Endothelial cell of umbilical vein (primary cell): ENCODE measurements at regions of chr5 and their contacts with region 1.

Region 1: DNA sequence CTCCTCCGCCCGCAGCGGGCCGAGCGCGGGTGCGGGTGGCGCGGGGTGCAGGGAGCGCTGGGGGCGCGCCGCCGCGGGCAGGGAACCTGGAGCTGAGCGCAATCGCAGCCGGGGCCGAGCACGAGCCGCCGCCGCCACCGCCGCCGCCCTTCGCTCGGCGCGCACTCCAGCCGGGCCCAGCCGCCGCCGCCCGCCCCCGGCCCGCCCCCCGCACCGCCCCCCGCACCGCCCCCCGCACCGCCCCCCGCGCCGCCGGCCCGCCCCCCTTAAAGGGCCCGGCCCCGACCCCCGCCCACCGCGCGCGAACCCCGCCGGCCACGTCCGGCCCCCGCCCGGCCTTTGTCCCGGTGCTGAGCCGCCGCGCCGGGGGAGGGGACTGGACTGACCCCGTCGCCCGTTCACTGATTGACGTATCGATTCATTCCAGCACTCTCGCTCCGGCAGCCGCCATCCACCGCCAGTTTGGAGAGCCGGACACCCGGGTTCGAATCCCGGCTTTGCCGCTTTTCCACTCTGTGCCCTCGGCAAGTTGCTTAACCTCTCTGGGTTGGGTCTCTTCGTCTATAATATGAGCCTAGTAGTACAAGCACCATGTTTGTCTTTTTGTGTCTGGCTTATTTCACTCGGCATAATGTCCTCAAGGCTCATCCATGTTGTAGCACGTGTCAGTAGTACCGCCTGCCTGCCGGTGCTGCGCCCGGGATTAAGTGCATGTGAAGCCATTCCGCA is at the start of gene SH3PXD2B:
- DNase-seq: peak; percentile 51
- H3K4me3 ChIP-seq: peak within 1 kb of the TSS; percentile 92 to 98 (median 95)
- H3K27ac ChIP-seq: peak within 1 kb of the TSS; percentile 63
- H3K4me1 ChIP-seq: peaks cover 36% of the 10 kb centered on the region
- H3K27me3 ChIP-seq: no peaks in the 10 kb centered on the region
- CTCF ChIP-seq: no peak
- POLR2A ChIP-seq: peak; percentile 61
- total RNA-seq, gene SH3PXD2B: 66.3 and 71.8 TPM in 2 replicates

Region 2: GRCh38 chr5:171633816-171634470 is 820.6 kb before region 1 on chr5:
- CTCF ChIA-PET with region 1: no interaction called
- POLR2A ChIA-PET with region 1: no interaction called
- dilution Hi-C with region 1: no loop called
- intact Hi-C with region 1: no loop called
- DNase-seq: no peak
- H3K4me3 ChIP-seq: no peak overlapping the region
- H3K27ac ChIP-seq: no peak overlapping the region
- H3K4me1 ChIP-seq: peaks cover 9% of the 10 kb centered on the region
- H3K27me3 ChIP-seq: peaks cover 0 to 2% of the 10 kb centered on the region in 2 experiments
- CTCF ChIP-seq: no peak
- POLR2A ChIP-seq: no peak

Region 3: GRCh38 chr5:172283020-172283861 is 171.3 kb before region 1 on chr5 and contains the start of gene UBTD2:
- CTCF ChIA-PET with region 1: interaction called, 4 read pairs
- POLR2A ChIA-PET with region 1: no interaction called
- dilution Hi-C with region 1: no loop called
- intact Hi-C with region 1: loop called (anchors 5 kb)
- DNase-seq: peak; percentile 79
- H3K4me3 ChIP-seq: peak within 1 kb of the TSS; percentile 73 to 93 (median 92)
- H3K27ac ChIP-seq: peak within 1 kb of the TSS; percentile 82
- H3K4me1 ChIP-seq: peaks cover 21% of the 10 kb centered on the region
- H3K27me3 ChIP-seq: no peaks in the 10 kb centered on the region
- CTCF ChIP-seq: peak; percentile 35 to 65
- POLR2A ChIP-seq: peak; percentile 84
- total RNA-seq, gene UBTD2: 21.6 and 22.6 TPM in 2 replicates

Region 4: GRCh38 chr5:172412724-172413286 is 41.7 kb before region 1 on chr5:
- CTCF ChIA-PET with region 1: interaction called, 23 read pairs
- POLR2A ChIA-PET with region 1: no interaction called
- dilution Hi-C with region 1: no loop called
- intact Hi-C with region 1: loop called (anchors 2 kb)
- DNase-seq: peak; percentile 71
- H3K4me3 ChIP-seq: no peak overlapping the region
- H3K27ac ChIP-seq: peak overlapping the region; percentile 53
- H3K4me1 ChIP-seq: peaks cover 21% of the 10 kb centered on the region
- H3K27me3 ChIP-seq: no peaks in the 10 kb centered on the region
- CTCF ChIP-seq: no peak
- POLR2A ChIP-seq: no peak

Region 5: GRCh38 chr5:172428224-172429166 is 26.0 kb before region 1 on chr5:
- CTCF ChIA-PET with region 1: interaction called, 18 read pairs
- POLR2A ChIA-PET with region 1: no interaction called
- dilution Hi-C with region 1: no loop called
- intact Hi-C with region 1: no loop called
- DNase-seq: no peak
- H3K4me3 ChIP-seq: no peak overlapping the region
- H3K27ac ChIP-seq: no peak overlapping the region
- H3K4me1 ChIP-seq: no peaks in the 10 kb centered on the region
- H3K27me3 ChIP-seq: no peaks in the 10 kb centered on the region
- CTCF ChIP-seq: no peak
- POLR2A ChIP-seq: no peak

Region 6: DNA sequence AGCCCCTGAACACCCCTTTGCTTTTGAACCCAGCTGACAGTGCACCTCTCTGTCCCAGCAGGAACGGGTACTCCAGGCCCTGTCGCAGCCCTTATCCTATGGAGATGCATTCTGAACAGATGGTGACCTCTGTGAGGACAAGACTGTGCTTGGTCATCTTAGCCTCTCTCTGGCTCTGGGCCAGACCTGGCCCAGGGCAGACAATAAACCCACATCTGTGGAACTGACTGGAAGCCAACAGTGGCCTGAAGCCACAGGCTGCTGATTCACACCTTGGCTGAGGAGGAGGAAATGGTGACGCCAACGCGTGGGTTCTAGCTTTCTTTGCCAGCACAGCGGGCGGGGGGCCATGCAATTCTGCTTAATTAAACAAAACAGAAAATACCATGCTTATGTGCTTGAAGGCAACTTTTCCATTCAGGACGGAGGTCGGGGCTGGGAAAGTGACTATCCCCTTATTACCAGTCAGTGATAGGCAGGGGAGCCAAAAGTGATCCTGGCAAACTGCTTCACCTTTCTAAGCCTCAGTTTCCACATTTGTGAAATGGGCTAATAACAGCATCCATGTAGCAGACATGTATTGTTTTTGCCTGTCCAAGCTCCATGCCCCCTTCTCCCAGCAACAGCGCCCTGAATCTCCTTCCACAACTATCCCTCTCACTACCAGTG is 10.9 kb before region 1 on chr5:
- CTCF ChIA-PET with region 1: interaction called, 31 read pairs
- POLR2A ChIA-PET with region 1: no interaction called
- dilution Hi-C with region 1: no loop called
- intact Hi-C with region 1: loop called (anchors 1 kb)
- DNase-seq: peak; percentile 97
- H3K4me3 ChIP-seq: no peak overlapping the region
- H3K27ac ChIP-seq: peak overlapping the region; percentile 87
- H3K4me1 ChIP-seq: peaks cover 46% of the 10 kb centered on the region
- H3K27me3 ChIP-seq: no peaks in the 10 kb centered on the region
- CTCF ChIP-seq: no peak
- POLR2A ChIP-seq: peak; percentile 42

Region 7: GRCh38 chr5:172697123-172698121 is 242.9 kb after region 1 on chr5:
- CTCF ChIA-PET with region 1: interaction called, 41 read pairs
- POLR2A ChIA-PET with region 1: no interaction called
- dilution Hi-C with region 1: no loop called
- intact Hi-C with region 1: no loop called
- DNase-seq: peak; percentile 82
- H3K4me3 ChIP-seq: peak overlapping the region; percentile 8 to 47 (median 36)
- H3K27ac ChIP-seq: no peak overlapping the region
- H3K4me1 ChIP-seq: peaks cover 5% of the 10 kb centered on the region
- H3K27me3 ChIP-seq: peaks cover 6 to 11% of the 10 kb centered on the region in 2 experiments
- CTCF ChIP-seq: peak; percentile 87 to 91
- POLR2A ChIP-seq: no peak